ENCODE measurements at regions of chr3 and their contacts with region 1.

Region 1: DNA sequence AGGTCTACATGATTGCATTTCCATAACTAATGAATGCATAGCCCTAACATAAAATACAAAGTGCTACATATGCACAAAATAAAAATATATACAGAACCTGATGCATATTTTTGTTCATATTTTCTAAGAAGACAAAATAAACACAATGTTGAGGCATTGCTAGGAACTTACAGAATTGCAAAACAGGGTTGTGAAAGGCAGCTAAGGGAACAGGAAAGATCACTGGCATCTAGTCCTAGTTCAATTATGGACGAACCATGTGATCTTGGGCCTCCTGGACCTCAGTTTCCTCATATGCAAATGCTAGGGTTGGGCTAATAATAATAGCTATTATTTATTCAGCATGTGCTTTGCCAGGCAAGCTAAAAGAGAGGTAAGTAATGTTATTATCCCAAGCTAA is 15.5 kb upstream of the NCEH1 start:
- H3K4me3 ChIP-seq: no peak overlapping the region
- H3K27ac ChIP-seq: no peak overlapping the region
- H3K4me1 ChIP-seq: no peaks in the 10 kb centered on the region
- CTCF ChIP-seq: no peak

Region 2: DNA sequence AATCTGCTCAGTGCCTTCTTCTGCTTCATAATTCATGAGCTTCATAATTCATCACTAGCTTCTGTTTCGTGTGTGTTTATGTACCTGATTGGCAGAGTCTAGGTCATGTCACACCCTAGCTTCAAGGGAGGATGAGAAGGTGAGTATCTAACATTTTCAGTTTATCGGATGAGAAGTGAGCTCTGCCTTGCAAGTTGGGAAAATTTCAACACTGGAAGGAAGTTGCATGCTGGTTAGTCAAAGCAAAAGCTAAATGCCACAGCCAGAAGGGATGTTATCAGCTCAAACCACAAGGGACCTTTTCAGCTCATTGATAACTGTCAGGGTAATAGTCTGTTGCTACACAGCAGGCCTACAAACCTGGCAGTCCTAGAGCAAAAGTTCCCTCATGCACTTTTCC is 195.8 kb before region 1 on chr3:
- CTCF ChIA-PET with region 1: no interaction called
- POLR2A ChIA-PET with region 1: no interaction called
- H3K4me3 ChIP-seq: no peak overlapping the region
- H3K27ac ChIP-seq: no peak overlapping the region
- H3K4me1 ChIP-seq: no peaks in the 10 kb centered on the region
- CTCF ChIP-seq: no peak

Region 3: GRCh38 chr3:172750368-172751174 is 24.2 kb after region 1 on chr3 and contains the start of gene ECT2:
- CTCF ChIA-PET with region 1: interaction called, 10 read pairs
- POLR2A ChIA-PET with region 1: no interaction called
- H3K4me3 ChIP-seq: peak within 1 kb of the TSS; percentile 99
- H3K27ac ChIP-seq: peak within 1 kb of the TSS; percentile 77
- H3K4me1 ChIP-seq: no peaks in the 10 kb centered on the region
- CTCF ChIP-seq: peak; percentile 58; the same call in 1 of the 2 replicates

Measured in HEK293 (cell line).